ENCODE measurements at regions of chr1 and their contacts with region 1.

Region 1: DNA sequence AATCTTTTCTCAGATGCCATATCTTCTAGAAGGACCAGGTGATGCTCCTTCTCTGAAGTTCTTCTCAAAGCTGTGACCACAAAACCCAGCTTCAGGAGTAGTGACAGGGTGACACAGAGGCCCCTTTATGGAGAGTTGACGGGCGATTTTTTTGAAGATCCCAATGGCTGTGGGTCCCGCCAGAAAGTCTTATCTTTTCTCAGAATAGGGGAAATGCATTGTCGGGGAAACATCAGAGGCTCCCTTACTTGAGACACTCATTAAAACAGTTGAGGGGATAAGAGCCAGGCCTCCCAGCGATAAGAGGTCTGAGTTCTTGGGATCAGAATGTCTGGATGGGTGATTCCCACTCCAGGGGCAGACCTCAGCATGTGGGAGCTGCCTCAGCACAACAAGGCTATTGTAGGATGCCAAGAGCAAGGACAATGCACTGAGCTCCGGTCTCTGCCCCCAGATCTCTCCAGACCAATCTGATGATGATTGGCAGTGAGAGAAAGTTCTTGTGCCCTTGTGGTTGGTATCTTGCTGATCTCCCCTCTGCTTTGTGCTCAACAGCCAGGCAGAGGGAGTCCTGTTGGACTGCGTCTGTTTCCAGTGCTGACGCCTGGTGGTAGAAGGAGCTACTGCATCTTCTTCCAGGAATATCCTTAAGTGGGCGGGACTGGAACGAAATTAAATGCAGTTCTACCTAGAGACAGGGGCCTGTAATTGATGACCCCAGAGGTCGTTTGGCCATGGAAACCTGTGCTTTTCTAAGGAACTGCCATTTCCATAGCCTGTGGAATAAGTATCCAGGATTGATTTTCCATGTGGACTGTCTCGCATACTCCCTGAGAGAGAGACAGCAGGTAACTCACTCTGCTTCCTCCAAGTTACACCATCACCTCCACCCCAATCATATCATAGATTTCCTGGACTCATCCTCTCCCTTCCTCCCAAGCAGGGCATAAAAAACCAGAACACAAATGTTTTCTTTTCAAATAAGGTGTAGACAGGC is 6.8 kb upstream of the ACKR1 start:
- DNase-seq: peak; percentile 76 to 83
- H3K4me3 ChIP-seq: no peak overlapping the region
- H3K27ac ChIP-seq: no peak overlapping the region
- H3K4me1 ChIP-seq: no peaks in the 10 kb centered on the region
- H3K27me3 ChIP-seq: peaks cover 0 to 22% of the 10 kb centered on the region in 2 donors
- CTCF ChIP-seq: peak; percentile 77 to 78

Region 2: DNA sequence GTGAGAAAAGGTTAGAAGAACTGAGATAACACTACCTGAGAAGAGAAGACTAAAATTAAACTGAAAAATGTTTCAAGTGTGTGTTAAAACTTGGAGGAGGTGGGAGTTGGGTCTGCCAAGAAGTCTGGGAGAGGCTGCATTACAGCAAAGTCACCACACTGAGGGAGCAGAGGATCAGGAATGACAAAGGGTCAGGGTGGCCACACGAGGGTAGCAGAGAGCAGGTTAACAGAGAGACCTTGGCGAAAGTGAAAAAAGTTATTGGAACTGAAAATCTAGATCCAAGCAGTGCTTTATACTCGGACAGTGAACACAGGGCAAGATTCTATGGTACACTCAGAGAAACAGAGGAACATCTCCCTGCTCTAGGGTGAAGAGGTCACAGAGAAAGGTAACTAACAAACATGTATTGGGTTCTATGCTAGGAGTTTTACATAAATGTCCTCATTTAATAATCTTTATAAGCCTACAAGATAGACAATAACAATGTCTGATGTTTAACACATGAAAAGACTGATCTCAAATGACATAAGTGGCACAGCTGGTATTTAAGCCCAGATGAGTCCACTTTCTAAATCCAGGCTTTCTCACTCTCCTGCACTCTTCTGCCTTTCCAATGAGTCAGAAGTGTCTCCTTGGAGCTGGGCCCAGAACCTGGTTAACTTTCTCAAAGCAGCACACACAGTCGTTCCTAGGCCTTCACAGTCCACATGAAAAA is 36.7 kb before region 1 on chr1:
- intact Hi-C with region 1: loop called (anchors 5 kb)
- DNase-seq: peak; percentile 67 to 78
- H3K4me3 ChIP-seq: no peak overlapping the region
- H3K27ac ChIP-seq: no peak overlapping the region
- H3K4me1 ChIP-seq: peaks cover 0 to 7% (median 6%) of the 10 kb centered on the region in 4 donors
- H3K27me3 ChIP-seq: peaks cover 0 to 7% of the 10 kb centered on the region in 2 donors
- CTCF ChIP-seq: peak; percentile 89 to 96

Region 3: DNA sequence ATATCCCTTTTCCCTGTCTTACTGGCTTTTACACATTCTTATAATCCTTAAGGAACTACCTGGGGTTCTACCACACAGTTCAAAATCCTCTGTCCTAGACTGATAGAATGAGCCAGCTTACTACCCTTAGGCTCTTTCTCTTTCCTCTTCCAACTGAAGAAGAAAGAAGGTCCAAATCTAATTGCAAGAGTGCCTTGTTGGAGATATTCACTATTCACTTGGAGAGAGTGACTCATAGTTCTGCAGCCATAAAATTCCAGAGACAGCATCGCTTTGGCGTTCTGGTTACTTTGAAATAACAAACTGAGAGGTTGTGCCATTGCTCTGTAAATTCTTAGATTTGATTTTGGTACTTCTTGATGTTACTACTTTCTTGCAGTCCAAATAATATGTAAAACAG is 22.3 kb before region 1 on chr1:
- intact Hi-C with region 1: loop called (anchors 1 kb)
- DNase-seq: no peak
- H3K4me3 ChIP-seq: no peak overlapping the region
- H3K27ac ChIP-seq: no peak overlapping the region
- H3K4me1 ChIP-seq: peaks cover 0 to 24% (median 13%) of the 10 kb centered on the region in 4 donors
- H3K27me3 ChIP-seq: peaks cover 0 to 35% of the 10 kb centered on the region in 2 donors
- CTCF ChIP-seq: no peak

Region 4: GRCh38 chr1:159218649-159219636 is 21.1 kb after region 1 on chr1:
- intact Hi-C with region 1: no loop called
- DNase-seq: no peak
- H3K4me3 ChIP-seq: no peak overlapping the region
- H3K27ac ChIP-seq: no peak overlapping the region
- H3K4me1 ChIP-seq: peaks cover 0 to 3% (median 0%) of the 10 kb centered on the region in 4 donors
- H3K27me3 ChIP-seq: peaks cover 0 to 28% of the 10 kb centered on the region in 2 donors
- CTCF ChIP-seq: no peak